OCI-LY7 (cell line): ENCODE measurements at regions of chr19 and their contacts with region 1.

Region 1: GRCh38 chr19:55599468-55600279 is at the start of gene FIZ1:
- DNase-seq: peak; percentile 98
- H3K4me3 ChIP-seq: peak within 1 kb of the TSS; percentile 74
- H3K27ac ChIP-seq: peak within 1 kb of the TSS; percentile 94
- H3K4me1 ChIP-seq: peaks cover 33% of the 10 kb centered on the region
- CTCF ChIP-seq: no peak
- total RNA-seq, gene FIZ1: 6.0 and 6.8 TPM in 2 replicates

Region 2: DNA sequence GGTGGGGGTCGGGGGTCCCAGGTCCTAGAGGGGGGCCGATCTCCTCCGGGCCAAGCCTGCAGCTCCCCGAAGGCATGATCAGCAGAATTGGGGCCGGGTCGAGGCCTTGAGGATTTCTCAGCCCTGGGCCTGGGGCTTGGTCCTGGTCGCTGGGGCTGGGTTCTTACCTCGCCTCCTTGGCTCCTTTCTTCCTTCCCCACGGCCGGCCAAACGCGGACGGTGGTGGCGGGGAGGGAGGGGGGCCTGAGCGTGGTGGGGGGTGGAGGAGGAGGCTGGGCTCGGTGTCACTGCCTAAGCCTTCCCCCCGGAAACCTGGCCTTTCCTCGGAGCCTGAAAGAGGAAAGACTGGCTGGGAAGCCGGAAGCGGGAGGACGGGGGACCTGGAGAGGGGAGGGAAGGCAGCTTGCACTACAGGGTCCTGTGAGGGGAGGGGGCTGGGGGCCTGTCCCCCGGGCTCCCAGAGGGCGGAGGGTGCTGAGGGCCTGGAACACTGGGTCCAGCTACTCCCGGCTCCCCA is 19.0 kb before region 1 on chr19 and contains the start of gene ZNF579:
- CTCF ChIA-PET with region 1: no interaction called
- POLR2A ChIA-PET with region 1: interaction called, 7 read pairs
- intact Hi-C with region 1: loop called (anchors 2 kb)
- DNase-seq: peak; percentile 89
- H3K4me3 ChIP-seq: peak within 1 kb of the TSS; percentile 88
- H3K27ac ChIP-seq: peak within 1 kb of the TSS; percentile 49
- H3K4me1 ChIP-seq: peaks cover 16% of the 10 kb centered on the region
- CTCF ChIP-seq: no peak
- total RNA-seq, gene ZNF579: 4.1 and 6.1 TPM in 2 replicates

Region 3: DNA sequence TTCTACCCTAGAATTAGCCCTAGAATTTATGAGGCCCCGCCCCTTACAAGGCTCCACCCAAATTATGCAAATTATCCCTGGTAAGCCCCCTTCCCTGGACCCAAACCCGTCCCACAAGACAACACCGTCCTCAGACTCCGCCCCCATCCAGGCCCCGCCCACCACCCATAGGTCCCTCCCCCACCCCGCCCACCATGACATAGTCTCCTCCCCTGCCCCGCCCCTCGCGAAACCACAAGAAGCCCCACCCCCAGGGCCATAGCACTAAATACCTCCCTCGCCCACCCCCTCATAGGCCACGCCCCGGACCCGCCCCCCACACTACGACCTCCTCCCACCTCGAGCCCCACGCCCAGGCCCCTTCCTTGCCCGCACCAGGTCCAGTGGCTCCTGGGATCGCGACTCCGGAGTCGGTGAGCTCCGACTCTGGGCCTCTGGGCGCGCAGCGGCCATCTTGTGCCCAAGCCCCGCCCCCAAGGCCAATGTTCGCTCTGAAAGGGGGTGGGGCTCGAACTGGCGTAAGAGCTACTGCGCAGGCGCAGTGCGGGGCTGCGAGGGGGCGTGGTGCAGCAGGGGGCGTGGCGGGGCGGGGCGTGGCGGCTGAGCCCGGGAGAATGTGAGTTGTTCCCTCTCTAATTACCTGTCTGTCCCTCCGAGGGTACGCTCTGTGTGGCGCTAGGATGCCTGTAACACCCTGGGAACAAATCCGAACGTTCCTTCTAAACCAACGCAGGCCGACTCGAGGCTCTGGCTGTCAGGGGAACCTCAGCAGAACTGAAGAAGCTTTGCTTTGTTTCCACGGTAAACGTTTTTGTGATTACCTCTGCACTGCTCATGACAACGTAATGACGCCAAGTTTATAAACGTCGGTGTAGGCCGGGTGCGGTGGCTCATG is 24.7 kb after region 1 on chr19 and contains the start of gene ZNF784:
- CTCF ChIA-PET with region 1: no interaction called
- POLR2A ChIA-PET with region 1: interaction called, 15 read pairs
- intact Hi-C with region 1: no loop called
- DNase-seq: peak; percentile 97
- H3K4me3 ChIP-seq: peak within 1 kb of the TSS; percentile 67
- H3K27ac ChIP-seq: peak within 1 kb of the TSS; percentile 63
- H3K4me1 ChIP-seq: peaks cover 11% of the 10 kb centered on the region
- CTCF ChIP-seq: no peak
- total RNA-seq, gene ZNF784: 3.4 and 6.6 TPM in 2 replicates

Region 4: GRCh38 chr19:55643348-55644176 is 43.9 kb after region 1 on chr19 and contains the start of gene ZNF581:
- CTCF ChIA-PET with region 1: no interaction called
- POLR2A ChIA-PET with region 1: interaction called, 3 read pairs
- intact Hi-C with region 1: loop called (anchors 1 kb)
- DNase-seq: peak; percentile 88
- H3K4me3 ChIP-seq: peak within 1 kb of the TSS; percentile 98
- H3K27ac ChIP-seq: peak within 1 kb of the TSS; percentile 86
- H3K4me1 ChIP-seq: peaks cover 62% of the 10 kb centered on the region
- CTCF ChIP-seq: no peak
- total RNA-seq, gene ZNF581: 26.6 and 44.5 TPM in 2 replicates

Region 5: DNA sequence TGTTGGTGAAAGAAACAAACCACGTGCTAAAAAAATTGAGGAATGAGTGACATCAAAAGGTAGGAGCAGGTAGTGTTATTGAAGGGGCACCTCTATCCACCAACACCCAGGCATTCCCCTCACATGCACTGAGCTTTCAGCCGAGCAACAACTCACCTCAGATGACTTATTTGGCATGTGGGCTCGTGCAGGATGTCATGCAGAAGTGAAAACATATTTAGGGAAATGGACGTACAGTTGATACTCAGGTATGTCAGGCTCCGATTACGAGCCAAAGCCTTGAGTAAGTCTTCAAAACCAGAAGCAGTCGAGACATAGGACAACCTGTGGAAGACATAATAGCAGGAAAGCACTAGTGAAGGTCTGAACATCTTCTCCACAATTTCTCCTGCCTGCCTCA is 201.7 kb after region 1 on chr19:
- CTCF ChIA-PET with region 1: no interaction called
- POLR2A ChIA-PET with region 1: no interaction called
- intact Hi-C with region 1: no loop called
- DNase-seq: peak; percentile 57
- H3K4me3 ChIP-seq: peak overlapping the region; percentile 38
- H3K27ac ChIP-seq: peak overlapping the region; percentile 53
- H3K4me1 ChIP-seq: peaks cover 22% of the 10 kb centered on the region
- CTCF ChIP-seq: no peak